K562 (cell line): ENCODE measurements at regions of chr11 and their contacts with region 1.

Region 1: DNA sequence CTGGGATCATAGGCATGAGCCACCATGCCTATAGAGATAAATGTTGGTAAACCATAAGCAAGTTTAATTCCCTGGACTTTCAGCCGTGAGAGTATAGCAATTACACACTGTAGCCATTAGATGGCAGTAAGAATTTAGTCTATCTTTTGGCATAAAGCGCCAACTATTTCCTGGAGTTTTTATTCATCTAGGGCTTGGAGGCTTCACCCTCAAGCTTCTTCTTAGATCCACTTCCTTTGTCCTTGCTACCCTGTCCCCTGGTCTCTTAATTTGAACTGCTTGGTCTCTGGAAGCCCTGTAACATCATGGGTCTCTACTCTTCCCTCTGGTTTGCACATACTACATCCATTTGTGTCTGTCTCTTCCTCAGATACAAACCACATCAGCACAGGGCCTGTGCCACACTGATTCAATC is 38.2 kb downstream of the OR10A6 start:
- DNase-seq: peak; percentile 11 to 53 (median 28)
- ATAC-seq: peak; percentile 87
- H3K4me3 ChIP-seq: no peak overlapping the region
- H3K27ac ChIP-seq: no peak overlapping the region
- H3K4me1 ChIP-seq: no peaks in the 10 kb centered on the region
- H3K27me3 ChIP-seq: no peaks in the 10 kb centered on the region
- CTCF ChIP-seq: peak; percentile 50 to 81 (median 63); a peak in 5 of 6 replicates
- EP300 ChIP-seq: no peak
- POLR2A ChIP-seq: no peak
- RAD21 ChIP-seq: peak; percentile 48 to 81

Region 2: DNA sequence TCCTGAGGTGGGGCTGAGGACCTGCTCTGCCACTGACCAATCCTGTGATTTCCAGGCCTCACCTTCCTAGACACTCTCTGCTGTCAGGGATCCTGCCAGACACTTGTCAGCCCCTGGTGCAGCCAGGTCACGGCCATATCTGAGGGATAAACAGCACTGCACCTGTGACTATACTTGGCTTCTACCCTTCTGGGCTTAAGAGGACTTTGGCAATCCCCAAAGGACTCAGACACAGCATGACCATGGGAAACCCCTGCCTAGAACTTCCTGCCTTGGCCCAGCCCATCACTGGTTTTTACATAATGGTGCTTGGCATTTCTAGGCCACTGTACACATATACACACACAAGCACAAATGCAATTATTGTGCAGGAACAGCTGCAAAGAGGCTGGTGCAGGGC is 419.1 kb before region 1 on chr11:
- CTCF ChIA-PET with region 1: no interaction called
- POLR2A ChIA-PET with region 1: no interaction called
- in situ Hi-C with region 1: no loop called
- intact Hi-C with region 1: no loop called
- DNase-seq: no peak
- ATAC-seq: no peak
- H3K4me3 ChIP-seq: no peak overlapping the region
- H3K27ac ChIP-seq: no peak overlapping the region
- H3K4me1 ChIP-seq: no peaks in the 10 kb centered on the region
- H3K27me3 ChIP-seq: no peaks in the 10 kb centered on the region
- CTCF ChIP-seq: no peak
- EP300 ChIP-seq: no peak
- POLR2A ChIP-seq: no peak
- RAD21 ChIP-seq: no peak

Region 3: GRCh38 chr11:7974668-7975067 is 81.8 kb after region 1 on chr11:
- CTCF ChIA-PET with region 1: no interaction called
- POLR2A ChIA-PET with region 1: no interaction called
- in situ Hi-C with region 1: no loop called
- intact Hi-C with region 1: no loop called
- DNase-seq: no peak
- ATAC-seq: peak; percentile 54; the same call in 2 of the 3 replicates
- H3K4me3 ChIP-seq: no peak overlapping the region
- H3K27ac ChIP-seq: no peak overlapping the region
- H3K4me1 ChIP-seq: no peaks in the 10 kb centered on the region
- H3K27me3 ChIP-seq: no peaks in the 10 kb centered on the region
- CTCF ChIP-seq: no peak
- EP300 ChIP-seq: no peak
- POLR2A ChIP-seq: no peak
- RAD21 ChIP-seq: no peak

Region 4: GRCh38 chr11:7986768-7987559 is 94.1 kb after region 1 on chr11 and contains the start of gene EIF3F:
- CTCF ChIA-PET with region 1: interaction called, 8 read pairs
- POLR2A ChIA-PET with region 1: no interaction called
- in situ Hi-C with region 1: no loop called
- intact Hi-C with region 1: loop called (anchors 1 kb)
- DNase-seq: peak; percentile 94 to 98 (median 96)
- ATAC-seq: peak; percentile 99
- H3K4me3 ChIP-seq: peak within 1 kb of the TSS; percentile 53
- H3K27ac ChIP-seq: peak within 1 kb of the TSS; percentile 64
- H3K4me1 ChIP-seq: peaks cover 0 to 10% of the 10 kb centered on the region in 2 experiments; a peak in 3 of 5 replicates
- H3K27me3 ChIP-seq: no peaks in the 10 kb centered on the region; a peak in 1 of 5 replicates
- CTCF ChIP-seq: peak; percentile 76 to 87 (median 87)
- EP300 ChIP-seq: peak; percentile 45; the same call in 1 of the 2 replicates
- POLR2A ChIP-seq: peak; percentile 85
- RAD21 ChIP-seq: peak; percentile 77 to 85
- polyA plus RNA-seq, gene EIF3F: 50.1 to 59.7 TPM

Region 5: GRCh38 chr11:8092587-8093424 is 200.0 kb after region 1 on chr11:
- CTCF ChIA-PET with region 1: interaction called, 5 read pairs
- POLR2A ChIA-PET with region 1: no interaction called
- in situ Hi-C with region 1: loop called (anchors 10 kb)
- intact Hi-C with region 1: loop called (anchors 2 kb)
- DNase-seq: peak; percentile 73 to 88 (median 82)
- ATAC-seq: peak; percentile 94
- H3K4me3 ChIP-seq: no peak overlapping the region
- H3K27ac ChIP-seq: no peak overlapping the region
- H3K4me1 ChIP-seq: peaks cover 0 to 3% of the 10 kb centered on the region in 2 experiments; a peak in 2 of 5 replicates
- H3K27me3 ChIP-seq: peaks cover 0 to 51% of the 10 kb centered on the region in 2 experiments; a peak in 3 of 5 replicates
- CTCF ChIP-seq: peak; percentile 75 to 77 (median 75)
- EP300 ChIP-seq: no peak
- POLR2A ChIP-seq: no peak
- RAD21 ChIP-seq: peak; percentile 32 to 47